Right cardiac atrium (tissue), 5 donors: ENCODE measurements at regions of chr12 and their contacts with region 1.

Region 1: DNA sequence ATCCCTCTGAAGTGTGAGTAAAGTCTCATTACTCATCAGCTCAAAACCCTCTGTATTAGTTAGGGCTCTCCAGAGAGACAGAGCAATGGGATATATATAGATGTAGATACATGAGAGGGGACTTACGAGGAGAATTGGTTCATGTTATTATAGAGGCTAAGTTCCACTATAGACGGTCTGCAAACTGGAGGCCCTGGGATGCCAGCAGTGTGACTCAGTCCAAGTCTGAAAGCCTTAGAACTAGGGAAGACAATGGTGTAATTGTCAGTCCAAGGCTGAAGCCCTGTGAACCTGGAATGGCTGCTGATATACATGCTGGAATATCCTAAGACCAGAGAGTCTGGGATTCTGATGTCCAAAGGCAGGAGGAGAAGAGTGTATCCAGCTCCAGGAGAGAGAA is 57.3 kb upstream of the CEP83 start:
- DNase-seq: no peak
- ATAC-seq: no peak
- H3K4me3 ChIP-seq: no peak overlapping the region
- H3K27ac ChIP-seq: no peak overlapping the region
- H3K4me1 ChIP-seq: no peaks in the 10 kb centered on the region
- H3K27me3 ChIP-seq: no peaks in the 10 kb centered on the region

Region 2: DNA sequence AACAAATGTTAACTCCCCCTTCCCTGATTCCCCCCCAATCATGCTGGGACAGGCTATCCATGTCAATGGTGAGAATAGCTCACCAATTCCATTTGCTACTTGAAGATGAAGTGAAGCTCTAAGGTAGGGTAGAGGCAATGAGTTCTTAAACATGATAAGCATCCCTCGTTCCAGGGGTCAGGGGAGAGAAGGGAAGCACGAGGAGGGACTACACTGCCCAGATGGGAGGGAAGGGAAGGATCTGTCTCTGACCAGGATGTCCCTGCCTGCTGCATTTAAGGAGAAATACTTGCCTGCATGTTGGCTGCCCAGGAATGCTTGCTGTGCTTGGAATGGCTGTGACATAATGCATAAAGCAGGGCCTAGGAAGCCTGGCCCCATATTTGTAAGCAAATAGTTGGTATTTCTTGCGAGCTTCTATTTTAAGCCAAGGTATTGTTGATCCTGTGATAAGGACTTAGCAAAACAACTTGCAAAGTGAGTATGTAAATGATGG is 212.4 kb before region 1 on chr12:
- intact Hi-C with region 1: no loop called
- DNase-seq: no peak
- ATAC-seq: no peak
- H3K4me3 ChIP-seq: no peak overlapping the region
- H3K27ac ChIP-seq: no peak overlapping the region
- H3K4me1 ChIP-seq: peaks cover 5% of the 10 kb centered on the region
- H3K27me3 ChIP-seq: no peaks in the 10 kb centered on the region

Region 3: DNA sequence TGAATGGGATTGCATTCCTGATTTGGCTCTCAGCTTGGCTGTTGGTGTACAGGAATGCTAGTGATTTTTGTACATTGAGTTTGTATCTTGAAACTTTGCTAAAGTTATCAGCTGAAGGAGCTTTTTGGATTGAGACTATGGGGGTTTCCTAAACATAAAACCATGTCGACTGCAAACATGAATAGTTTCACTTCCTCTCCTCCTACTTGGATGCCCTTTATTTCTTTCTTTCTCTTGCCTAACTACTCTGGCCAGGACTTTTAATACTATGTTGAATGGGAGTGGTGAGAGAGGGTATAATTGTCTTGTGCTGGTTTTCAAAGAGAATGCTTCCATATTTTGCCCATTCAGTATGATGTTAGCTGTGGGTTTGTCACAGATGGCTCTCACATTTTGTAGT is 198.8 kb before region 1 on chr12:
- intact Hi-C with region 1: loop called in 1 of 4 experiments (anchors 10 kb)
- DNase-seq: no peak
- ATAC-seq: no peak
- H3K4me3 ChIP-seq: no peak overlapping the region
- H3K27ac ChIP-seq: no peak overlapping the region
- H3K4me1 ChIP-seq: no peaks in the 10 kb centered on the region
- H3K27me3 ChIP-seq: no peaks in the 10 kb centered on the region

Region 4: GRCh38 chr12:94445662-94446061 is 71.3 kb before region 1 on chr12:
- intact Hi-C with region 1: loop called in 1 of 4 experiments (anchors 10 kb)
- DNase-seq: no peak
- ATAC-seq: no peak
- H3K4me3 ChIP-seq: no peak overlapping the region
- H3K27ac ChIP-seq: no peak overlapping the region
- H3K4me1 ChIP-seq: no peaks in the 10 kb centered on the region
- H3K27me3 ChIP-seq: no peaks in the 10 kb centered on the region